ENCODE measurements at regions of chr15 and their contacts with region 1.

Region 1: DNA sequence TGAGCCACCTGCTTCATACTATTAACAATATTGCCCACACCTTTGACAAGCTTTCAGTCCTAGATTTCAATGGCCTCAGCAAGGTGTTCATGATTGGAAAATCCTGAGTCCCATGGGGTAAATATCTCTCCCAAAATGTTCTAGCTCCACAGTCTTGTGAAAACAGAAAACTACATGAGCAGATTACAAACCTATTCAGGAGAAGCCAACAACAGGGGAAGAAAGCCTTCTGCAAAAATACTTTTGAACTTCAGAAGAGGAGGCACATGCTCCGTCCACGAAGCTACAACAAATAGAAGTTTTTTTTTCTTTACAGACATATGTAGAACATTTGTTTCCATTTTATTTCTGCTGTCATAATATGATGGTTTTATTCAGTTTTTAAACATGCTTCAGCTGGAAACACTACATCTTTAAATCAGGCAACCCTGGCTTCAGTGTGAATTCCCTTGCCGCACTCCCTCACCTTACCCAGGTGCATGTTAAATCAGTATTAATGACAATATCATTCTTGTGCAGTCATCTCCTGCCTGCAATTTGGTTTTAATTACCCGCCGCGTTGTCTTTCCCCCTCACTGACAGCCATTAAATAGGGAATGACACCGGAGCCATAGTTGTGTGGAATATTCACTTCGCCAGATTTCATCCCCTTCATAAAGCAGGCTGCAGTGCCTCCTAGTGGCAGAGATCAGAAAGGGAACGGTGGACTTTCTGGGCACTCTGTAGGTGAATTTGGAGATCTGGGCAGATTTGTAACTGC is 725.5 kb upstream of the ARRDC4 start:
- DNase-seq: peak; percentile 39
- ATAC-seq: peak; percentile 88
- H3K4me3 ChIP-seq: no peak overlapping the region
- H3K27ac ChIP-seq: no peak overlapping the region
- H3K4me1 ChIP-seq: no peaks in the 10 kb centered on the region
- H3K27me3 ChIP-seq: no peaks in the 10 kb centered on the region
- CTCF ChIP-seq: peak; percentile 78
- POLR2A ChIP-seq: no peak
- RAD21 ChIP-seq: peak; percentile 86

Region 2: GRCh38 chr15:96345560-96346399 is 889.3 kb before region 1 on chr15:
- CTCF ChIA-PET with region 1: no interaction called
- POLR2A ChIA-PET with region 1: no interaction called
- dilution Hi-C with region 1: no loop called
- in situ Hi-C with region 1: loop called (anchors 10 kb)
- intact Hi-C with region 1: no loop called
- DNase-seq: peak; percentile 83
- ATAC-seq: peak; percentile 46
- H3K4me3 ChIP-seq: peak overlapping the region; percentile 40
- H3K27ac ChIP-seq: peak overlapping the region; percentile 88
- H3K4me1 ChIP-seq: peaks cover 49% of the 10 kb centered on the region
- H3K27me3 ChIP-seq: no peaks in the 10 kb centered on the region
- CTCF ChIP-seq: peak; percentile 56
- POLR2A ChIP-seq: no peak
- RAD21 ChIP-seq: peak; percentile 67

Measured in IMR-90 (cell line).